Pancreas (tissue), 10 donors: ENCODE measurements at regions of chr5 and their contacts with region 1.

Region 1: GRCh38 chr5:80668016-80668969 is 13.5 kb upstream of the DHFR start:
- DNase-seq: peak in 1 of 6 donors; percentile 37
- ATAC-seq: peak in 2 of 4 donors; percentile 30 to 42
- H3K4me3 ChIP-seq: no peak overlapping the region
- H3K27ac ChIP-seq: no peak overlapping the region
- H3K4me1 ChIP-seq: no peaks in the 10 kb centered on the region
- H3K27me3 ChIP-seq: no peaks in the 10 kb centered on the region
- CTCF ChIP-seq: no peak

Region 2: DNA sequence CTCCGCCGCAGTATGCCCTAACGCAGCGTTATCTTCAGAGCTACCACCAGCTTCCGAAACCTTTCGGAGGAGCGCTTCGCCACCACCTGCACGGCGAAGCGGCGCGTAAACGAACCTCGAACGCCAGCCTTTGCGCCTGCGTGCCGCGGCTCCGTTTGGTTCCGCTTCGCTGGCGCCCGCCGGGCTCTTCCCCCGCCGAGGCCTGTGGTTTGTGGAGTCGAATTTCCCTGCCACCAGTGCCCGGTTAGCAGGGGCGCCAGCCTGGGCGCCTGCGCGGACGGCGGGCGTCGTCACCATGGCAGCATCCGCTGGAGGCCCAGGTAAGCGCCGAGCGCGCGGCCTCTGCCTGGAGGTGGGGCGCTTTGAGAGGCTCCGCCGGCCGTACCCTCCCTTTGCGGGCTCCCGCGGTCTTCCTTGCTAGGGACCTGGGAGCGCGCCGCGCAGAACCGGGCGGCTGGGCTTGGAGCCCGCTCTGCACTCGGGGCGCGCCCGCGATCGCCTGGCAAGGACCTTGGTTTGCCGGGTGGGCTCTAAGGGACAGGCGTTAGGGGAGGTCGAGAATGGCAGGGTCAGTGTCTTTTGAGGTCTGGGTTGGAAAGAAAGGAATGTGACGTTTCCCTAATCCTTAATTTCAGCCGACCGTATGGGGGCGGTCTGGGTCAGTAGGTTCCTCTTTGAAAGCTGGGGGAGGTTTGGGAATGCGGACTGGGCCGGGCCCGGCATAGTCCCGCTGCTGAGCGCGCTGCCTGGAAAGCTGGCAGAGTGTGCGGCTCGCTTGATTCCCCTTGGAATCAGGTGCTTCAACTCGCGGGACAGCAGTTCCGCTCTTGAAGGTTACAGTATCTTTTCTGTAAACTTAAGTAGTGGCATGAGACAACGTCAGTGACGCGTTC is 180.2 kb before region 1 on chr5 and contains the start of gene FAM151B:
- intact Hi-C with region 1: loop called in 2 of 3 experiments (anchors 10 kb)
- DNase-seq: peak; percentile 95 to 98 (median 97)
- ATAC-seq: peak; percentile 94 to 98 (median 96)
- H3K4me3 ChIP-seq: peak within 1 kb of the TSS; percentile 54 to 70 (median 56)
- H3K27ac ChIP-seq: peak within 1 kb of the TSS; percentile 80 to 90 (median 86)
- H3K4me1 ChIP-seq: peaks cover 0 to 3% (median 0%) of the 10 kb centered on the region in 3 donors
- H3K27me3 ChIP-seq: no peaks in the 10 kb centered on the region
- CTCF ChIP-seq: no peak
- total RNA-seq, gene FAM151B: 1.1 to 2.5 (median 1.9) TPM

Region 3: DNA sequence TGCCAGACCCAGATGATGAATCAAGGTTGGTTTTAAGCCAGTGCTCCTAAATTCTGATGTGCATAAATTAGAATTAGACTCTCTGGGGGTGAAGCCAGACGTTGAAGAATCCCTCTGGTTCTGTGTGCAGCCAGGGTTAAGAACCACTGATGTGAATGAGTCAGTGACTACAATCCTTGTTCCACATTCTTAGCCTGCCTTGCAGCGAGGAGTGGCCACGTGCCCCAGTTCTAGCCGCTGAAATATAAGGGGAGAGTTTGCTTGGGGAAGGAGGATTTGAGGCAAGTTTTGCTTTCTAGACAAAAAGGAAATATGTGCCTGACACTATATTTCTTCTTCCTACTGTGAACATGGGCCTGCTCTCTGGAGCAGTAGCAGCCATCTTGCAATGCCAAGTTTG is 48.1 kb before region 1 on chr5:
- intact Hi-C with region 1: no loop called
- DNase-seq: no peak
- ATAC-seq: peak in 2 of 4 donors; percentile 50 to 64
- H3K4me3 ChIP-seq: no peak overlapping the region
- H3K27ac ChIP-seq: no peak overlapping the region
- H3K4me1 ChIP-seq: peaks cover 0 to 5% (median 0%) of the 10 kb centered on the region in 3 donors
- H3K27me3 ChIP-seq: no peaks in the 10 kb centered on the region
- CTCF ChIP-seq: no peak

Region 4: DNA sequence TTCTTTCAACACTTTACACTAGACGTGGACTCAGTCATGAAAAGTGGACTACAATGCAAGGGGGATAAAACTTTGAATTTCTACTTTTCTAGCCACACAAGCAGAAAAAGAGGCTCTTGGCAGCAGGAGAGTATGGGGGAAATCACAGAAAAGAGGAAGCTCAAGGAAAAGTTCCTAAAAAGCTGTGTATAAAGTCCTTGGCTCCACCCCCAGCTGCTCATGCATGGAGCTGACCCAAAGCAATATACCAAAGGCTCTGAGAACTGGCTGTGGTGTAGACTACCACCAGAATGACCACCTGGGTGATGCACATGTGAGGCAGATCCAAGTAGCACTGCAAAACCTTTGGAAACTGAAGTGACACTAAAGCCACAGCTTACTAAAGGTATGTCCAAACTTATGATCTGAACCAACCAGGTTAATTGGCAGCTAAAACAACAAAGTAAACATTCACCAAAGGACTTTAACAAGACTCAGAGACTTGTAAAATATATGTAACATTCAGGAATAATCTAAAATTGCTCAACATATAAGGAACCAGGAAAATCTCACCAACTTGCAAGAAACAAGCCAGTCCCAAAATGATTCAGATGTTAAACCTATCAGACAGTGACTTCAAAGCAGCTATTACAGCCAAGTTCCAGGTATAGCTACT is 236.4 kb after region 1 on chr5:
- intact Hi-C with region 1: no loop called
- DNase-seq: no peak
- ATAC-seq: no peak
- H3K4me3 ChIP-seq: no peak overlapping the region
- H3K27ac ChIP-seq: no peak overlapping the region
- H3K4me1 ChIP-seq: no peaks in the 10 kb centered on the region
- H3K27me3 ChIP-seq: no peaks in the 10 kb centered on the region
- CTCF ChIP-seq: no peak